A549 (cell line): ENCODE measurements at regions of chr1 and their contacts with region 1.

Region 1: GRCh38 chr1:84936116-84936810 is 43.3 kb upstream of the LPAR3 start:
- DNase-seq: peak; percentile 46 to 47
- ATAC-seq: peak; percentile 68 to 75; a peak in 4 of 6 replicates
- H3K4me3 ChIP-seq: no peak overlapping the region
- H3K27ac ChIP-seq: no peak overlapping the region
- H3K4me1 ChIP-seq: no peaks in the 10 kb centered on the region
- CTCF ChIP-seq: peak; percentile 80
- EP300 ChIP-seq: no peak
- POLR2A ChIP-seq: no peak
- RAD21 ChIP-seq: peak; percentile 78 to 80

Region 2: DNA sequence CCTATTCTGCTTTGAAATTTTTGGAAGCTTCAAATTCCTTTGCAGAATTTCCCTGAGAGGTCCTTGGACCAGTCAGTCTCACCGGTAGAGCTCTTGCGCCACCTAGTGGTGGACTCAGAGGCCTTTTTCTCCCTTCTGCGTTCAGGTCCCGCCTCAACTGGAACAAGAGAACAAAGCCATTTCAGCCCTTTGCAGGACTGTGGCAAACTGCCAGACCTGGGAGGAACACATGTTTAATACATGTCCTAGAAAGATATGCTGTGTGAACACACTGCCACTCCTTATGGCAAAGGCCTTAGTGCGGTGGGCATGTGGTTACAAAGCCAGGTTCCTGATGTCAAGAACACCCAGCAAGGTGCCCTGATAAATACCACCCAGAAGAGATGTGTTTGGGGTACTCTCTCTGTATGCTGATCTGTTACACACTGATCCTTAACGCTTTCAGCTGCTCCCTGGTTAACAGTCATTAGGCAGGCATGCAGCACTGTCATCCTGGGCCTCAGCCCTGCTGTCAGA is 163.8 kb before region 1 on chr1:
- CTCF ChIA-PET with region 1: interaction called, 13 read pairs
- POLR2A ChIA-PET with region 1: no interaction called
- DNase-seq: peak; percentile 54 to 62
- ATAC-seq: peak; percentile 87 to 96
- H3K4me3 ChIP-seq: no peak overlapping the region
- H3K27ac ChIP-seq: no peak overlapping the region
- H3K4me1 ChIP-seq: no peaks in the 10 kb centered on the region
- CTCF ChIP-seq: peak; percentile 75
- EP300 ChIP-seq: no peak
- POLR2A ChIP-seq: no peak
- RAD21 ChIP-seq: peak; percentile 81 to 85

Region 3: GRCh38 chr1:84781946-84782771 is 154.1 kb before region 1 on chr1:
- CTCF ChIA-PET with region 1: interaction called, 10 read pairs
- POLR2A ChIA-PET with region 1: no interaction called
- DNase-seq: peak; percentile 72 to 80
- ATAC-seq: peak; percentile 97 to 99
- H3K4me3 ChIP-seq: peak overlapping the region; percentile 41
- H3K27ac ChIP-seq: peak overlapping the region; percentile 28 to 50; a peak in 1 of 6 replicates
- H3K4me1 ChIP-seq: no peaks in the 10 kb centered on the region
- CTCF ChIP-seq: peak; percentile 61
- EP300 ChIP-seq: no peak
- POLR2A ChIP-seq: no peak
- RAD21 ChIP-seq: peak; percentile 40 to 54; a peak in 4 of 5 replicates

Region 4: DNA sequence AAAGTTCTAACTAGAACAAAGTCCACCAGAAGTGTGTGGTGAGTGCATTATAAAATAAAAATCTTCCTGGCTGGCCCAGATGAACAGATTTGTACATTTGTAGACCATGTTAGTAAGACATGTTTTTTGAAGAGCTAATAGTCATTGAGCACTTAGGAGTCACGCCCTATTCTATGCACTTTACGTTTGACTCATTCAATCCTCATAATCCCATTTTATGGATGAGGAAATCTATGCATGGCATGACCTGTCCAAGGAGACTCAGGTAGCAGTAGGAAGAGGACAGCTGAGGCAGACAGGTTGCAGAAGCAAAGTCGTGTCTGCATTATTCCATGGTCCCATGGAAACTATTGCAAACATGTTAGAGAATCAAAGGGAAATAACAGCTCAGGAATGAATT is 12.9 kb before region 1 on chr1:
- CTCF ChIA-PET with region 1: interaction called, 29 read pairs
- POLR2A ChIA-PET with region 1: no interaction called
- DNase-seq: no peak
- ATAC-seq: no peak
- H3K4me3 ChIP-seq: no peak overlapping the region
- H3K27ac ChIP-seq: no peak overlapping the region
- H3K4me1 ChIP-seq: no peaks in the 10 kb centered on the region
- CTCF ChIP-seq: no peak
- EP300 ChIP-seq: no peak
- POLR2A ChIP-seq: no peak
- RAD21 ChIP-seq: no peak

Region 5: GRCh38 chr1:85259118-85259911 is 323.1 kb after region 1 on chr1 and contains the start of gene C1orf52:
- CTCF ChIA-PET with region 1: interaction called, 13 read pairs
- POLR2A ChIA-PET with region 1: no interaction called
- DNase-seq: peak; percentile 56 to 89
- ATAC-seq: peak; percentile 94 to 96
- H3K4me3 ChIP-seq: peak within 1 kb of the TSS; percentile 98
- H3K27ac ChIP-seq: peak within 1 kb of the TSS; percentile 89 to 90
- H3K4me1 ChIP-seq: peaks cover 4% of the 10 kb centered on the region; the same call in 1 of the 3 replicates
- CTCF ChIP-seq: peak; percentile 78
- EP300 ChIP-seq: no peak
- POLR2A ChIP-seq: peak; percentile 86
- RAD21 ChIP-seq: peak; percentile 42 to 58
- polyA plus RNA-seq, gene C1orf52: 19.7 and 22.4 TPM in 2 replicates